Endothelial cell of umbilical vein (primary cell): ENCODE measurements at regions of chr10 and their contacts with region 1.

Region 1: GRCh38 chr10:123904834-123905409 is 13.3 kb upstream of the CPXM2 start:
- DNase-seq: no peak
- H3K4me3 ChIP-seq: no peak overlapping the region
- H3K27ac ChIP-seq: no peak overlapping the region
- H3K4me1 ChIP-seq: no peaks in the 10 kb centered on the region
- H3K27me3 ChIP-seq: no peaks in the 10 kb centered on the region
- CTCF ChIP-seq: no peak
- POLR2A ChIP-seq: no peak

Region 2: GRCh38 chr10:123926401-123927264 is 21.7 kb after region 1 on chr10:
- CTCF ChIA-PET with region 1: interaction called, 3 read pairs
- POLR2A ChIA-PET with region 1: no interaction called
- dilution Hi-C with region 1: no loop called
- intact Hi-C with region 1: loop called (anchors 1 kb)
- DNase-seq: no peak
- H3K4me3 ChIP-seq: no peak overlapping the region
- H3K27ac ChIP-seq: no peak overlapping the region
- H3K4me1 ChIP-seq: no peaks in the 10 kb centered on the region
- H3K27me3 ChIP-seq: no peaks in the 10 kb centered on the region
- CTCF ChIP-seq: no peak
- POLR2A ChIP-seq: no peak